AG04449 (cell line): ENCODE measurements at regions of chr12 and their contacts with region 1.

Region 1: DNA sequence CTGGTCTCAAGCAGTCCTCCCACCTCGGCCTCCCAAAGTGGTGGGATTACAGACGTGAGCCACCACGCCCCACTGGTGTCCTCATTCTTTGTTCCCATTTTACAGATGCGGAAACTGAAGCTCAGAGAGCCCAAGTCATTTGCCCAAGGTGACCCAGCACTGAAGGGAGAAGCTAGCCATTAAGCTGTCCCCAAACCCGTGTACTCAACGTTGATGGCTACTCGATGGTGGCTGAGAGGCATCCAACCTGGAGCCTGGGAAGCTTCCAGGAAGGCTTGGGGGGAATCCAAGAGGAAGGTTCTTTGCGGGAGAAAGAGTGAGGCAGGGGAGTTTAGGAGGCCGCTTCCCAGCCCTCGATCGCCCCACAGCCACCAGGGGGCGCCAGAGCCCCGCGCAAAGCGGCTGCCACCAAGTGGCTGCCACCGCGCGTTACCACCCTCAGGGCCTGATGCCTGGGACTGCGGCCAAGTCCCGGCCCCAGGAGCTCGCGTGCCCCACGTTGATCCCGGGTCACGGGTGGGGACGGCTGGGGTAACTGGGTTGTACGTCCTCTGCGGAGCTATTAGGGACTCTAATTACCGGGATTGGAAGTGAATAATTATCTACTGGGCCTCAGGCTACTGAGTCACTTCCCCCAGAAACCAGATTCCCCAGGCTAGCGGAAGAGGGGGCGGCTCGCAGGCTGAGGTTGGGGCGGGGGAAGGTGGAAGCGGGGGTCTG is 8.8 kb upstream of the SH2B3 start:
- DNase-seq: no peak
- H3K4me3 ChIP-seq: peak overlapping the region; percentile 38
- CTCF ChIP-seq: peak; percentile 99

Region 2: DNA sequence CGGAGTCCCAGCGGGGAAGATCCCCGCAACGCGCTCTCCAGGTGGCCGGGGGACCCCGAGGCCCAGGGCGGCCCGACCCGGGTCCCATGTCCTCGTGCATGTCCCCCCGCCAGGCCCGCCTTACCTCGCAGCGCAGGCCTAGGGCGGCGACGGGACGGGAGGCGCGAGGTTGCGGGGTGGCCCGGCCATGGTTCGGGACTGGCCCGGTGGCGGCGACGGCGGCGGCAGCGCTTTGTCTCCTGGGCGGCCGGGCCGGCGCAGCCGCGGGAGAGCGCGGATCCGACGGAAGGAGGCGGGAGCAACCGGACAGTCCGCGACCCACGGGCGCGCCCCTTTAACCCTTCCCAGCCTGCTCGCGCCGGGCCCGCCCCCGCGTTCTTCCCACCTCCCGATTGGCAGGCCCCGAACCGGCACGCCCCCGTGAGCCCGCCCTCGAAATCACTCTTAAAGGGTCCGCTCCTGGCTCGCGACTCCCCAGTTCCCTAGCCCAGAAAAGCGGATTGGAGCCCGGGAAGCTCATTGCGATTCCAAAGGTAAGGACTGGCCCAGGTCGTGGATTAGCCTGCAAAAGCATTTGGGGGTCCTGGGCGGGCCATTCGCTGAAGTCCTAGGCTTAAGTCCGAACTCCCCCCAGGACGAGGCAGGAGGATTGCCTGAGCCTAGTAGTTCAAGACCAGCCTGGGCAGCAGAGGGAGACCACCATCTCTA is 27.9 kb before region 1 on chr12 and contains the start of gene PHETA1:
- CTCF ChIA-PET with region 1: interaction called, 33 read pairs
- POLR2A ChIA-PET with region 1: no interaction called
- DNase-seq: peak; percentile 17
- H3K4me3 ChIP-seq: peak within 1 kb of the TSS; percentile 83
- CTCF ChIP-seq: no peak

Region 3: GRCh38 chr12:111386885-111387284 is 10.0 kb before region 1 on chr12:
- CTCF ChIA-PET with region 1: interaction called, 72 read pairs
- POLR2A ChIA-PET with region 1: no interaction called
- DNase-seq: no peak
- H3K4me3 ChIP-seq: no peak overlapping the region
- CTCF ChIP-seq: no peak

Region 4: DNA sequence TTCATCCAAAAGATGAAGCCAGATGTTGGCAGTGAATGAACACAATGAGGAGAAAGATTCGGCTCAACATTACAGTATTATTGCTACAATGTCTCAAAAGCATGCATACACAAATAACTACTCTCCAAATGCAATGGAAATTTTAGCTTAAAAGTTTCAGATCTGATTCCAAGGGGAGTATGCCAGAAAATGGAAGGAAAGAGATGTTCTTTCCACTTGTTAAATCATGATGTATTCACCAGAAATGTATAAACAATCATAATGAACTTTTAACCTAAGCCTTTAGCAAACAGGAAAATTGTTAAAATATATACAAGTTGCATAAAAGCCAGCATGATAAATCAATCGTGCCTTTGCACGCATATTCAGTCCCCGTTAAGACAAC is 71.0 kb after region 1 on chr12:
- CTCF ChIA-PET with region 1: interaction called, 899 read pairs
- POLR2A ChIA-PET with region 1: no interaction called
- DNase-seq: no peak
- H3K4me3 ChIP-seq: no peak overlapping the region
- CTCF ChIP-seq: no peak

Region 5: DNA sequence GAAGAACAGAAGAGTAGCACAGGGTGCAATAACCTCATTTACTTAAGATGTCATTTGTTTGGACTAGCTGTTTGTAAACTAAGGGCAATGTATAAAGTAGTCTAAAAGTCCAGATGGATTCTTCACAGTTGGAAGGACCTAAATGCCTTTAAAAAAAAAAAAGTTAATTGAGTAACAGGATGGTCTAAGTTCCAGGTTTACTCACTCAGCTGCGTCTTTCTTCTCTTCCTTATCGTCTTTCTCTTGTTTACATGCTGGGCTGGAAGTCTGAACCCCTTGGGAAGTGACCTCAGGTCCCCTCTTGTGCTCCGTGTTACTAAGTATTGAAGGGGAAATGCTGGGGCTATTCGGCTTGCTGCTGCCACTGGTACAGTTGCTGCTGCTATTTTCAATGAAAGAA is 91.4 kb after region 1 on chr12:
- CTCF ChIA-PET with region 1: interaction called, 35 read pairs
- POLR2A ChIA-PET with region 1: interaction called, 3 read pairs
- DNase-seq: no peak
- H3K4me3 ChIP-seq: no peak overlapping the region
- CTCF ChIP-seq: no peak

Region 6: DNA sequence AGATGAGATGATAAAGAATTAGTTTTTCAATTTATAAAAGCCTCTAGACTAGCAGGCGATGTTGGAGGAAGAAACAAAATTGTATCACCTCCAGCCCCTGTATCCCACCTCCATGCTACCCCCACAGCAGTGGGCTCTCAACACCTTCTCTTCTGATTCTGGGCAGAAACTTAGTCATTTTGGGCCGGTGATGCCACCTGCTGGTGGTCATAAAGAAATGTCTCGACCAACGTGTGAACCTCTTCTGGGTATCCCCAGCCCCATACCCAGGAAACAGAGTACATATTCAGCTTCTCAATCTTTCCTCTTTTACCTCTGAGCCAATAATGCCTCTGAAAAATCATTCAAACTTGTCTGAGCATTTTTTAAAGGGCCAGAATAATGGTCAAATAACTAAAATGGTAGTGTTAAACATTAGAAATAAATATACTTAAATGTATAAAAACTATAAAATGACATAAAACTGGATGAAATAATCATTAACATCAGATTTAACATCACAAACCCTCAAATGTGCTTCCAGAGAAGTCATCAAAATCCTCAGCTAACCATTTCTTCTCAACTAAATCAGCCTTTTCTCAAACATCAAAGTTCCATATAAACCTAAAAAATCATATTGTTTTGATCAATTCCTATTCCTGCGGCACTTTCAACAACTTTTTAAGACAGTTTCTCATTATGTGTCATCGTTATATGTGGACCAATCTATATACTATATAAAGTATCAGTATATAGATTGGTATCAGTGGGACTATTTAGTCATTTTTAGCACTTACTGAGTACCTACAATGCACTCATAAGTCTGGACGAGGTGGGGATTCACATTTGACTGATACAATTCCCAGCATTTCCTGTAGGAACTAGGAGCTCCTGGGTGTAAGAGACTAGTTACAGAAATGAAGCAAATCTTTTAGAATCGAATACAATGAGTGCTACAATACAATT is 132.8 kb after region 1 on chr12:
- CTCF ChIA-PET with region 1: interaction called, 74 read pairs
- POLR2A ChIA-PET with region 1: no interaction called
- DNase-seq: no peak
- H3K4me3 ChIP-seq: no peak overlapping the region
- CTCF ChIP-seq: peak; percentile 70

Region 7: GRCh38 chr12:111673503-111673902 is 276.6 kb after region 1 on chr12:
- CTCF ChIA-PET with region 1: interaction called, 64 read pairs
- POLR2A ChIA-PET with region 1: no interaction called
- DNase-seq: no peak
- H3K4me3 ChIP-seq: no peak overlapping the region
- CTCF ChIP-seq: peak; percentile 40

Region 8: DNA sequence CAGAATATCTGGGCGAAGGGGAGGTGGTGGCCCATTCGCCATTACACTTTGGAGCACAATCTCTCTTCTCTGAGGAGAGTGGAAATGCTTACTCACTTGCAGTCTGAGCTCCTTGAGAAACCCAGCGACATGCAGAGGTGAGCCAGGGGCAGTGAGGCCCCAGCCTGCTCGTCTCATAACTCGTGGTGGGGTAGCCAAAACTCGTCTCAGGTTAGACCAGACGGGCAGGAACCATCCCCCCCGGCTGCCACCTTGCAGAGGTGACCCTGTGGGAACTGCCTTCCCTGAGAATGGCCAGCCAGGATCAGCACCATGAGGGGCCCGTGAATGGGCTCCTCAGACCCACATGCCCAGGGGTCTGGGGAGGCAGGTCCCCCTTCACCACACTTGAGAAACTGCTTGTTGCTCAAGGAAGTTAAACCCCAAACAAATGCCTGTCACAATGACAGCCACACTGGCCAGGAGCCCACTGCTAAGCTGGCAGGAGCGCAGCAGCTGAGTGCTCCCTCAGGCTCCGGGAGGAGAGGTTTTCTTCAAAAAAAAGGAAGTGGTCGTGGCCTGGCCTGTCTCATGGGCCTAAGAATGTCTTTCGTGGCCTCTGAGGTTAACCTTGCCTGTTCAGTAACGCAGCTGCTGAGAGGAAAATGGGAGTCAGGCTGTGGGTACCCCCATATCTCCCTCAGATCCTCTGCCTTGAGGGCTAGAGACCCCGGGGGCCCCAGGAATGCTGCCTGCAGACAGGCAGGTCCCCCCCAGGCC is 360.7 kb after region 1 on chr12:
- CTCF ChIA-PET with region 1: no interaction called
- POLR2A ChIA-PET with region 1: no interaction called
- DNase-seq: no peak
- H3K4me3 ChIP-seq: no peak overlapping the region
- CTCF ChIP-seq: no peak

Region 9: GRCh38 chr12:112140728-112141127 is 743.8 kb after region 1 on chr12:
- CTCF ChIA-PET with region 1: no interaction called
- POLR2A ChIA-PET with region 1: no interaction called
- DNase-seq: no peak
- H3K4me3 ChIP-seq: no peak overlapping the region
- CTCF ChIP-seq: no peak